ENCODE measurements at regions of chr7 and their contacts with region 1.

Region 1: DNA sequence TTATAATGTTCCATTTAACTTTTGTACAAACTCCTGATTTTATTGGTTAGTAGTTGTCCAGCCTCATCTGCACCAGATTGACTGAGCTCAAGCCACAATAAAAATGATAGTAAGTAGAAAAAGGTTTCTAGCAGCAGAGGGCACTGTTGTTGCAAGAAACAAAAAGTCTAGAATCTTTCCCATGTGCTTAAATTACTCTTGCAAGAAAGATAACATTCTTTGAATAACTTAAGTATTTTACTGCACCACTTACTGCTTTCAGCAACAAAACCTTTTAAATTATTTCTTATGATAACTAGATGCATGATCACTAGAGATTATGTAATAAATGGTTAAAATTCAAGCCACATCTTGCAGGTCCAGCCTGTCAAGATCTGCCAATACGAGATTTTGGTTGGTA is 27.0 kb downstream of the LMOD2 start:
- DNase-seq: peak; percentile 23
- ATAC-seq: peak; percentile 65; the same call in 1 of the 2 replicates
- H3K4me3 ChIP-seq: no peak overlapping the region
- H3K27ac ChIP-seq: no peak overlapping the region
- H3K4me1 ChIP-seq: no peaks in the 10 kb centered on the region
- H3K27me3 ChIP-seq: no peaks in the 10 kb centered on the region
- CTCF ChIP-seq: peak; percentile 44 to 62 (median 45); a peak in 5 of 6 replicates
- POLR2A ChIP-seq: no peak
- RAD21 ChIP-seq: peak; percentile 69

Region 2: GRCh38 chr7:123580406-123581161 is 102.1 kb before region 1 on chr7:
- CTCF ChIA-PET with region 1: interaction called, 3 read pairs
- POLR2A ChIA-PET with region 1: no interaction called
- RAD21 ChIA-PET with region 1: no interaction called
- intact Hi-C with region 1: loop called (anchors 5 kb)
- DNase-seq: peak; percentile 35
- ATAC-seq: peak; percentile 98
- H3K4me3 ChIP-seq: no peak overlapping the region
- H3K27ac ChIP-seq: no peak overlapping the region
- H3K4me1 ChIP-seq: no peaks in the 10 kb centered on the region
- H3K27me3 ChIP-seq: no peaks in the 10 kb centered on the region
- CTCF ChIP-seq: peak; percentile 58 to 85 (median 82)
- POLR2A ChIP-seq: no peak
- RAD21 ChIP-seq: peak; percentile 79

Region 3: GRCh38 chr7:123865517-123866117 is 182.9 kb after region 1 on chr7:
- CTCF ChIA-PET with region 1: interaction called, 16 read pairs
- POLR2A ChIA-PET with region 1: no interaction called
- RAD21 ChIA-PET with region 1: no interaction called
- intact Hi-C with region 1: loop called (anchors 2 kb)
- DNase-seq: peak; percentile 49
- ATAC-seq: peak; percentile 98
- H3K4me3 ChIP-seq: no peak overlapping the region
- H3K27ac ChIP-seq: no peak overlapping the region
- H3K4me1 ChIP-seq: no peaks in the 10 kb centered on the region
- H3K27me3 ChIP-seq: no peaks in the 10 kb centered on the region
- CTCF ChIP-seq: peak; percentile 55 to 72 (median 65); a peak in 5 of 6 replicates
- POLR2A ChIP-seq: no peak
- RAD21 ChIP-seq: peak; percentile 69

Region 4: DNA sequence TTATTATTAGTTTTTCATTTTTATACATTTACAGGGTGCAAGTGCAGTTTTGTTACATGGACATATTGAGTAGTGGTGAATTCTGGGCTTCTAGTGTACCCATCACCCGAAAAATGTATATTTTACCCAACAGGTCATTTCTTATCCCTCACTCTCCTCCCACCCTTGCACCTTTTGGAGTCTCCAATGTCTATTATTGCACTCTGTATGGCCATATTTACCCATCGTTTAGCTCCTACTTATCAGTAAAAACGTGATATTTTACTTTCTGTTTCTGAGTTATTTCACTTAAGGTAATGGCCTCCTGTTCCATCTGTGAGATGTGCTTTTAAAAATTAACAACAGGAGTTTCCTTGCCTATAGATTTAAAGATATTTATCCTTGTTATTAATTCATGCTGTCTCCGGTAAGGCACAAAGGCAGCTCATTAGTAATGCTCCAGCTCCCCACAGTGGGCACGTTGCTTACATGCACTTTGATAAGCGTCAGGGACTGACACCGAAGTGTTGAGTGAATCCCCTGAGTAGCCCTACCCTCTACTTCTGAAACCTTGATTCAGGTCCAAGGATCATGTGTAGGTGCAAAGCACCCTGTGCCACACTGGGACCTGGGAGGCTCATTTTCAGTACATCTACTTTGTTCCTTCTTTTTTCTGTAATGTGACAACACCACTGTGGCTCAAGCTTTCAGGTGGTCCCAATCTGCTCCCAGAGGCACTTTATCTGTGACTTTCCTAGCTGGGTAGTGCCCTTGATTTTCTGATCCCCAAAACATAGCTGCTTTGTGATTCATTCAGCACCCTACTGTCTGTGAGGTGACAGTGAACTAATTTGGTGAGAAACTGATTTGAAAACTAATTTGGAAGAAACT is 189.5 kb after region 1 on chr7:
- CTCF ChIA-PET with region 1: interaction called, 16 read pairs
- POLR2A ChIA-PET with region 1: no interaction called
- RAD21 ChIA-PET with region 1: no interaction called
- intact Hi-C with region 1: loop called (anchors 1 kb)
- DNase-seq: peak; percentile 51
- ATAC-seq: peak; percentile 99
- H3K4me3 ChIP-seq: no peak overlapping the region
- H3K27ac ChIP-seq: no peak overlapping the region
- H3K4me1 ChIP-seq: no peaks in the 10 kb centered on the region
- H3K27me3 ChIP-seq: no peaks in the 10 kb centered on the region
- CTCF ChIP-seq: peak; percentile 54 to 67 (median 58); a peak in 5 of 6 replicates
- POLR2A ChIP-seq: no peak
- RAD21 ChIP-seq: peak; percentile 85

Measured in HCT116 (cell line).